ENCODE measurements at regions of chr10 and their contacts with region 1.

Region 1: DNA sequence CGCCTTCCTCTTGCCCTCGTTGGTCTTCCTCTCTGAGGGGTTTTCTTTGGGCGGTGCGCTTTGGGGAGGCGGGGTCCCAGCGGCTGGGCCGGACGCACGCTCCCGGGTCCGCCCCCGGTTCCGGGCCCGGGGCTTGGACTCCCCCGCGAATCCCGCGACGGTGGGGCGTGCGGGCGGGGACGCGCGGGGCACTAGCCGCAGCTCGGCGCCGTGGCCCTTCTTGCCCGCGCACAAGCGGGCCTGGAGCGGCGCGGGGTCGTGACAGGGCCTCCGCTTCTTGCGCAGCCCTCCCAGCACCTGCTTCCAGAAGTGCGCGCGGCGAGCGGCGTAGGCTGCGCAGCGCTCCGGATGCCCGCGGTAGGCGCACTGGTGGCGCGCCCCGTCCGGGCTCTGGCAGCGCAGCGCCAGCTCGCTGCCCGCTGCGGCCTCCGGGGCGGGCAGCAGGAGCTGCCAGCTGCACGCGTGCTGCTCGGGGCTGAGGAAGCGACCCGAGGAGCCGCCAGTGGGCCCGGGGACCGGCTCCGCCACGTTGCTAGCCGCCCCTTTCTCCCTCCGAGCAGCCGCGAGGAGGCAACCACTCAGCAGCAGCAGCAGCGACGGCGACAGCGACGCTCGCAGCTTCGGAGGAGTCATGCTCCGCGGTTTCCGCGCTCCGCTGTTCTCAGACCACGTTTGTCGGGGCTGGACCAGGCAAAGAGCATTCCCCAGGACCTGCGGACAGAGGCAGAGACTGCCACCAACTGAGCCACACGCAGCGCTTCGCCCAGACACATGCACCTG is 759 bp downstream of the FGFBP3 start:
- DNase-seq: peak; percentile 81
- H3K4me3 ChIP-seq: peak overlapping the region; percentile 57 to 71 (median 63)
- H3K27ac ChIP-seq: no peak overlapping the region
- H3K4me1 ChIP-seq: peaks cover 18% of the 10 kb centered on the region
- H3K27me3 ChIP-seq: peaks cover 3% of the 10 kb centered on the region in 2 experiments
- CTCF ChIP-seq: peak; percentile 37 to 51
- POLR2A ChIP-seq: no peak

Region 2: GRCh38 chr10:91493313-91493712 is 415.2 kb before region 1 on chr10:
- CTCF ChIA-PET with region 1: interaction called, 4 read pairs
- POLR2A ChIA-PET with region 1: no interaction called
- dilution Hi-C with region 1: no loop called
- intact Hi-C with region 1: loop called (anchors 5 kb)
- DNase-seq: peak; percentile 24
- H3K4me3 ChIP-seq: no peak overlapping the region
- H3K27ac ChIP-seq: no peak overlapping the region
- H3K4me1 ChIP-seq: no peaks in the 10 kb centered on the region
- H3K27me3 ChIP-seq: no peaks in the 10 kb centered on the region
- CTCF ChIP-seq: no peak
- POLR2A ChIP-seq: no peak

Region 3: DNA sequence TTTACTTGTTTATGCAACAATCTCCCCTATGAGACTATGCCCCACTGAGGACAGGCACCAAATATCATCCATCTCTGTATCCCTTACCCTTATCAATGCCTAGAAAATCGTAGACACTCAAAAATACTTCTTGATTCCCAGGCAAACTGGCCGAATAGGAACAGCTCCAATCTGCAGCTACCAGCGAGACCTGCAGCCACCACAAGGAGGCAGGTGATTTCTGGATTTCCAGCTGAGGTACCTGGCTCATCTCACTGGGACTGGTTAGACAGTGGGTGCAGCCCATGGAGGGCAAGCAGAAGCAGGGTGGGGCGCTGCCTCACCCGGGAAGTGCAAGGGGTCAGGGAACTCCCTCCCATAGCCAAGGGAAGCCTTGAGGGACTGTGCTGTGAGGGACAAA is 264.8 kb before region 1 on chr10:
- CTCF ChIA-PET with region 1: interaction called, 29 read pairs
- POLR2A ChIA-PET with region 1: no interaction called
- dilution Hi-C with region 1: no loop called
- intact Hi-C with region 1: loop called (anchors 2 kb)
- DNase-seq: no peak
- H3K4me3 ChIP-seq: no peak overlapping the region
- H3K27ac ChIP-seq: no peak overlapping the region
- H3K4me1 ChIP-seq: no peaks in the 10 kb centered on the region
- H3K27me3 ChIP-seq: peaks cover 3 to 14% of the 10 kb centered on the region in 2 experiments
- CTCF ChIP-seq: peak in 1 of 2 donors; percentile 12
- POLR2A ChIP-seq: no peak

Region 4: GRCh38 chr10:91797874-91798648 is 110.5 kb before region 1 on chr10 and contains the start of gene TNKS2:
- CTCF ChIA-PET with region 1: interaction called, 7 read pairs
- POLR2A ChIA-PET with region 1: no interaction called
- dilution Hi-C with region 1: no loop called
- intact Hi-C with region 1: loop called (anchors 2 kb)
- DNase-seq: peak; percentile 96
- H3K4me3 ChIP-seq: peak within 1 kb of the TSS; percentile 89 to 97 (median 89)
- H3K27ac ChIP-seq: peak within 1 kb of the TSS; percentile 64
- H3K4me1 ChIP-seq: peaks cover 24% of the 10 kb centered on the region
- H3K27me3 ChIP-seq: no peaks in the 10 kb centered on the region
- CTCF ChIP-seq: no peak
- POLR2A ChIP-seq: peak; percentile 95
- total RNA-seq, gene TNKS2: 33.3 and 34.0 TPM in 2 replicates

Region 5: DNA sequence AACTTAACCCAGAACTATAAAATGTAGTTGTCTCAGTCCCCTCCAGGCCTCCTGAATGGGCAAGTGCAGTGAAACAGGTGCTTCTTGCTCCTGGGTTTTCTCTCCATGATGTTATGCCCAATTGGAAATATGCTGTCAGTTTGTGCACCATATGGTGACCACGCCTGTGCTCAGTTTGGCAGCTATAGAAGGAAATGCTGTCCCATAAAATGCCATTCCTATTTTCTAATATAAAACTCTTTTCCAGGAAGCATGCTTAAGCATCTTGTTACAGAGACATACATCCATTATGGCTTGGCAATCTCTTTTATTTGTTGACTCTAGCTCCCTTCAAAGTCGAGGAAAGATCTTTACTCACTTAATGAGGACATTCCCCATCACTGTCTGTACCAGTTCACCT is 44.4 kb before region 1 on chr10:
- CTCF ChIA-PET with region 1: interaction called, 11 read pairs
- POLR2A ChIA-PET with region 1: no interaction called
- dilution Hi-C with region 1: no loop called
- intact Hi-C with region 1: no loop called
- DNase-seq: no peak
- H3K4me3 ChIP-seq: no peak overlapping the region
- H3K27ac ChIP-seq: no peak overlapping the region
- H3K4me1 ChIP-seq: no peaks in the 10 kb centered on the region
- H3K27me3 ChIP-seq: no peaks in the 10 kb centered on the region
- CTCF ChIP-seq: no peak
- POLR2A ChIP-seq: no peak

Region 6: DNA sequence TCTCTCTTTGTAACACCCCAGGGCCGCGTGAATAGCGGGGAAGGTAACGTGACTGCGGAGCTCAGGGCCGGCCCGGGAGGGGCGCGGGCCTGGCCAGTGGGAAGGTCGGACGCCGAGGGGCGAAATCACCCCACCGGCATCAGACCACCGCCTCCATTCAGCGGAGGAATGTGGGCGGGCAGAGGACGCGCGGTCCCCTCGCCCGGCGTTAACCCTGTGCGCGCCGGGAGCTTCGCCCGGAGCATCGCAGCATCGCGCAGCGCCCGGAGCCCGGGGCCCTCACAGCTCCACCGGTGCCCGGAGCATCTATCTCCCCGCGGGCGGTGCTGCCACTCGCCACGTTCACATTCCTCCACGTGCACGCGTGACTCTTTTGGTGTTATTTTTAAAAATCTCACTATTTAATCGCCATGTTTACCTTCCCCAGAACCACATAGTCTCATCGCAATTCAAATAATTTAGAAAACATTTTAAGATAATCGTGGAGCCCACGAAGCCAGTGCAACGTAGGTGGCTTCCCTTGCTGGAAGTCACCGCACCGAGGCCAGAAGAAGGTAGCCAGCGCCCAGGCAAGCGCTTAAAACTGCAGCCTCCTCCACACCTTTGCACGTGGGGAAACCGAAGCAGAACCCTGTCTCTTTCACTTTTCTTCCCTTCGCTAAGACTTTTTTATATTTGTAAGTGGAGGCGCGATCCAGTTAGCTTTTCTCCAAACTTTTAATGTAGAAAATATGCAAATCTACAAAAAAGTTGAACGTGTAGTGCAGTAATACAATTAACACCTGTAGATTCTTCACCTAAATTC is 21.1 kb before region 1 on chr10:
- CTCF ChIA-PET with region 1: interaction called, 11 read pairs
- POLR2A ChIA-PET with region 1: no interaction called
- dilution Hi-C with region 1: no loop called
- intact Hi-C with region 1: no loop called
- DNase-seq: peak; percentile 42
- H3K4me3 ChIP-seq: peak overlapping the region; percentile 48 to 86 (median 83)
- H3K27ac ChIP-seq: no peak overlapping the region
- H3K4me1 ChIP-seq: peaks cover 19% of the 10 kb centered on the region
- H3K27me3 ChIP-seq: no peaks in the 10 kb centered on the region
- CTCF ChIP-seq: no peak
- POLR2A ChIP-seq: no peak

Measured in endothelial cell of umbilical vein (primary cell).